WTC11 (cell line): ENCODE measurements at regions of chr15 and their contacts with region 1.

Region 1: GRCh38 chr15:84588053-84588874 is 12.5 kb upstream of the ZSCAN2 start:
- DNase-seq: peak; percentile 94
- ATAC-seq: peak; percentile 99
- H3K4me3 Mint-ChIP-seq: peak overlapping the region; percentile 66
- H3K27ac Mint-ChIP-seq: no peak overlapping the region
- H3K4me1 Mint-ChIP-seq: peaks cover 22% of the 10 kb centered on the region
- H3K27me3 Mint-ChIP-seq: peaks cover 19% of the 10 kb centered on the region
- CTCF ChIP-seq: peak; percentile 93

Region 2: DNA sequence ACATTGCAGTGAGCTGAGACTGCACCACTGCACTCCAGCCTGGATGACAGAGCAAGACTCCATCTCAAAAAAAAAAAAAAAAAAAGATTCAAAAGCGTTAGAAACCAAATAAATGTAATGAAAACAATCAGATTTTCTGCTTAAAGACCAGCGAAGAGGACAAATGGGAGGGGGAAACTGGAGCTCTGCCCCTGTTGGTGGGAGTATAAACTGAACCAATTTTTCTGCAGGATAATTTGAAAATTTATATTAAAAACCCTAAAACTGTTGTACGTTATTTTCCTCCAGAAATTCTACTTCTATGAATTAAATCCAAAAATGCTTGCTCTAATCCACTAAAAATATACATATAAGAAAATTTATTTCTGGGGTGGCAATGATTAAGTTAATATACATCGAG is 12.8 kb before region 1 on chr15:
- CTCF ChIA-PET with region 1: interaction called, 76 read pairs
- POLR2A ChIA-PET with region 1: interaction called, 3 read pairs
- DNase-seq: no peak
- ATAC-seq: no peak
- H3K4me3 Mint-ChIP-seq: no peak overlapping the region
- H3K27ac Mint-ChIP-seq: no peak overlapping the region
- H3K4me1 Mint-ChIP-seq: 0 out of 2 replicates have a peak, but pooled peaks cover 3% of the 10 kb centered on the region
- H3K27me3 Mint-ChIP-seq: no peaks in the 10 kb centered on the region
- CTCF ChIP-seq: no peak

Region 3: DNA sequence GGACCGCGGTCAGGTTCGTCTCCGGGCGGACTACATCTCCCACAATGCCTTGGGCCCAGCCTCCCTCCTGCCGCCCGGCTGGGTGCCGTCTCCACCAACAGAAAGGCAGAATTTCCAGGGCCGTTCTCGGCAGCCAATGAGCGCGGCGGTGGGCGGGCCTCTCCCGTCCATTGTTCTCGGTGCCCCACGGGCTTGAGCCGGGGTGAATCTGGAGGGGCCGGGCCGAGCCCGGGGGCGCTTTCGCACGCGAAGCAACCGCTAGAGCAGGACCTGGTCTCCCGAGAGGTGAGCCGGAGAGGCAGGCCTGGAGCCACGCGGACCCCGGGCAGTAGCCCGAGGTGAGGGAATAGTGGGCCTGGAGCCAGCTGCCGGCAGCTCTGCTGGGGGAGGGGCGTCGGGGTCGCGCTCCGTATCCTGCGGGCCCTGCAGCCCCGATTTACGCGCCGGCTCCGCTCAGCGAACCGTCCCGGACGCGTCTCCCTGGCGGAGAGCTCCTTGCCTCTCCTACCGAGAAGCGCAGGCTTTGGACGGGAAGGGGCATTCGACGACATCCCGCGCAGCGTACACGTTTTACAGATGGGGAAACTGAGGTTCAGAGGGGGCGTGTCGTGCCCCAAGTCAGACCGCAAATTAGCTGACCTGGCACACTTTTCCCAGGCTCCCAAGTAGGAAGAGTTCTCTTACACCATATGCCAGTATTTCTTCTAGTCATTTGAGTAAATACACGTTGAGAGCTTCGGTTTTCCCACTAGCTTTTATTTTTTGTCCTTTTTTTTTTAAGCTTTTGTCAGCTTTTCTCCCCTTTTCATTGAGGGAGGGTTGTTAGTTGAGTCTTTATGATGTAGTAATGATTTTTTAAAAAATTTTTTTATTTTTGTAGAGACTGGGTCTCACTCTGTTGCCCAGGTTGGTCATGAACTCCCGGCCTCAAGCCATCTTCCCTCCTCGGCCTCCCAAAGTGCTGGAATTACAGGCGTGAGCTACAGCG is 12.9 kb after region 1 on chr15 and contains the start of gene ZSCAN2:
- CTCF ChIA-PET with region 1: interaction called, 65 read pairs
- POLR2A ChIA-PET with region 1: no interaction called
- DNase-seq: peak; percentile 98
- ATAC-seq: peak; percentile 83
- H3K4me3 Mint-ChIP-seq: peak within 1 kb of the TSS; percentile 87
- H3K27ac Mint-ChIP-seq: peak within 1 kb of the TSS; percentile 78
- H3K4me1 Mint-ChIP-seq: peaks cover 48% of the 10 kb centered on the region
- H3K27me3 Mint-ChIP-seq: no peaks in the 10 kb centered on the region
- CTCF ChIP-seq: no peak
- total RNA-seq, gene ZSCAN2: 39.6 to 51.9 TPM (median 44.4 TPM) in 3 replicates

Region 4: GRCh38 chr15:84633311-84634227 is 45.3 kb after region 1 on chr15:
- CTCF ChIA-PET with region 1: interaction called, 55 read pairs
- POLR2A ChIA-PET with region 1: interaction called, 3 read pairs
- DNase-seq: peak; percentile 68
- ATAC-seq: peak; percentile 51
- H3K4me3 Mint-ChIP-seq: peak overlapping the region; percentile 90
- H3K27ac Mint-ChIP-seq: peak overlapping the region; percentile 52; the same call in 1 of the 2 replicates
- H3K4me1 Mint-ChIP-seq: peaks cover 52% of the 10 kb centered on the region
- H3K27me3 Mint-ChIP-seq: peaks cover 16% of the 10 kb centered on the region
- CTCF ChIP-seq: no peak

Region 5: DNA sequence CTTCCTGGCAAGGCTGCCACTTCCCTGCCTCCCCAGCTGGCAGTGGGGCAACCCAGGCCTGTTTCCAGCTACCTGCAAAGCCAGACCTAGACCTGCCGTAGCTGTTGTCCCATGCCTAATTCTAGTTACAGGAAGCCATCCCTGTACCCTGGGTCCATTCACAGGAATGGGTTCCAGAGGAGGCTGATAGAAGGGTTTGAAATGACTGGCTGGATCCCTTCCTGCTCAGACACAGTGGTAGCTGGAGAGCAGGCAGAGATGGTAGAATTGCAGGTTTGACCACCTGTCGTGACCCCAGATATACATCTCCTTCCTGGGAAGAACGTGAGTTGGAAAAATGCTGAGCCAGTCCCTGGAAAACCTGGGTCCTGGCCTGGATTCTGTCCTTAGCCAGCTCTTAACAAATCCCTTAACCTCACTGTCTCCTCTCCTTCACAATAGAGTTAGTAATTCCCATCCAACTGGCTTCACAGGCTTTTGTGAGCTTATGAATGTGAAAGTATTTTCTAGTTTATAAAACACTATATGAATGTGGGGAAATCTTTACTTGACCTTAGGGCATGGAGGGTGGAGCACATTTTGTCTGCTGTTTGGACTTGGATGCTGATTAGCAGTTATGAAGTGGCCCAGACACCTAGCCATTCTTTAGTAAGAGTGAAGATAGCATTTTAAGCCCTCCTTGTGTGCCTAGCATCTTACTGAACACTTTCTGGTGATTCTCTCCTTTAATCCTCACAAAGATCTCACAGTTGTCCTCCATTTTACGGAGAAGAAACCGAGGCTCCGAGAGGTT is 216.1 kb after region 1 on chr15:
- CTCF ChIA-PET with region 1: no interaction called
- POLR2A ChIA-PET with region 1: no interaction called
- DNase-seq: no peak
- ATAC-seq: no peak
- H3K4me3 Mint-ChIP-seq: no peak overlapping the region
- H3K27ac Mint-ChIP-seq: no peak overlapping the region
- H3K4me1 Mint-ChIP-seq: no peaks in the 10 kb centered on the region
- H3K27me3 Mint-ChIP-seq: no peaks in the 10 kb centered on the region
- CTCF ChIP-seq: no peak